Activated T-helper 1 cell treated with anti-CD3 and anti-CD28 coated beads, Interleukin-12 subunit alpha, Interleukin-12 subunit beta, Interleukin-2, Interleukin-4 antibody, amounts not matched to agents 30 ng/mL and 10 ng/mL and 1 ng/mL, durations not matched to agents 14 hours and 24 hours and 36 hours (primary cell): ENCODE measurements at regions of chr6 and their contacts with region 1.

Region 1: GRCh38 chr6:149316798-149317655 is 485 bp upstream of the TAB2 start:
- DNase-seq: peak; percentile 90
- H3K4me3 Mint-ChIP-seq: peak overlapping the region; percentile 85
- H3K27ac Mint-ChIP-seq: peak overlapping the region; percentile 85
- H3K4me1 Mint-ChIP-seq: peaks cover 39% of the 10 kb centered on the region
- H3K27me3 Mint-ChIP-seq: no peaks in the 10 kb centered on the region

Region 2: DNA sequence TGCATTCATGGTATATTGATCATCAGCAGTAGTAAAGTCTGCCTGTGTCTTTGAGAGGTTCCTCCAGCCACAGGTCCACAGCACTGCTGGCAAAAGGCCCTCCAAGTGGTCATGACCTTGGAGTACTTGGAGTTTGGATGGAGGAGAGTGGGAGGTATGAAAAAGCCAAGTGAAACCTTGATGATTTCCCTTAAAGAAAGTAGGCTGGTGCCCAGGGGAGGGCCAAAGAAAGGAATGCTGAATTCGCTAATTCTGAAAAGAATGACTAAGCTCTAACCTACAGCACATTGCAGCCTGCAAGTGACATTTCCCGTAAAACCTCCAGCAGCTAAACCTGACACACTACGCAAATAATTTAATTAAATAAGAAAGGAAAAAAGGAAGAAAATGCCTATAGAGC is 222.9 kb before region 1 on chr6:
- intact Hi-C with region 1: loop called (anchors 1 kb)
- DNase-seq: no peak
- H3K4me3 Mint-ChIP-seq: peak overlapping the region; percentile 64
- H3K27ac Mint-ChIP-seq: peak overlapping the region; percentile 88
- H3K4me1 Mint-ChIP-seq: peaks cover 78% of the 10 kb centered on the region
- H3K27me3 Mint-ChIP-seq: no peaks in the 10 kb centered on the region

Region 3: GRCh38 chr6:149134511-149134933 is 182.5 kb before region 1 on chr6:
- intact Hi-C with region 1: no loop called
- DNase-seq: no peak
- H3K4me3 Mint-ChIP-seq: no peak overlapping the region
- H3K27ac Mint-ChIP-seq: no peak overlapping the region
- H3K4me1 Mint-ChIP-seq: peaks cover 18% of the 10 kb centered on the region
- H3K27me3 Mint-ChIP-seq: no peaks in the 10 kb centered on the region

Region 4: GRCh38 chr6:149211046-149211571 is 105.9 kb before region 1 on chr6:
- intact Hi-C with region 1: loop called (anchors 1 kb)
- DNase-seq: no peak
- H3K4me3 Mint-ChIP-seq: no peak overlapping the region
- H3K27ac Mint-ChIP-seq: no peak overlapping the region
- H3K4me1 Mint-ChIP-seq: peaks cover 4% of the 10 kb centered on the region
- H3K27me3 Mint-ChIP-seq: no peaks in the 10 kb centered on the region

Region 5: DNA sequence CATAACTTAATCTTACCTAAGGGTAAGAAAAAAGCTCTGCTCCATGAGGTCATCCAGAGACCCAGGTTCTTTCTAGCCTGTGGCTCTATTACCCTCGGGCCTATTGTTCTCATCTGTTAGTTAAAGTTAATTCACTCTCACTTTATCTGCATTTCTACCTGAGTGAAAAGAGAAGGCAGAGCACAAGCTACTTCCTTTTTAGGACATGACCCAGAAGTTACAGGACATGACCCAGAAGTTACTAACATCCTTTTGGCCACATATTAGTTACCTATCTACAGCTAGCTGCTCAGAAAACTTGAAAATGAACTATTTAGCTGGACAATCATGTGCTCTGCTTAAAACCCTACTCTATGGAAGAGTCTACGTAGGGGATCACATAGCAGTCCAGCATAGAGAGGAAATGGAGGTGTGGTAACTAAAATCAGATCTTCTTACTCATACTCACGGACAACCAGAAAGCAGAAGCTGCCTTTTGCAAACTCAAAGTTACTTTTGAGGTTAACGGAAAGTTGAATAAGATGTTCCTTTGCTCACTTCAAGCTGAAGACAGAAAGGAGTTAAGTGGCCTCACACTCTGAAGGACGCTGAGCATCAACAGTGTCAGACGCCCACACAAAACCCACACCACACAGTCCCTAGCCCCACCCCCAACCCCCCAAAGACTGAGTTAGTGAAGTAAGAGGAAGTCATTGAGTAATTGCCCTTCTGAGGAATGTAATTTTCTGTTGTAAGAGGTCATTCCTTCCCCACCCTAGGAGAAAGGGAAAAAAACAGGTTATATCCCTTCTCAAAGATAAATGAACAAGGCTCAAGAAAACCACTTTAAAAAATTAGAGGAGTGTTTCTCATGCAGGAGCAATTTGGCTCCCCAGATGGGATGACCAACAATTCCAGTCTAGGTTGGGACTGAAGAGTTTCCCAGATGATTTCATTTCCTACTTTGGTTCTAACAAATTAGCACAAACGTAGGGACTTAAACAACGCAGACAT is 45.4 kb before region 1 on chr6:
- intact Hi-C with region 1: loop called (anchors 1 kb)
- DNase-seq: no peak
- H3K4me3 Mint-ChIP-seq: peak overlapping the region; percentile 62
- H3K27ac Mint-ChIP-seq: peak overlapping the region; percentile 94
- H3K4me1 Mint-ChIP-seq: peaks cover 56% of the 10 kb centered on the region
- H3K27me3 Mint-ChIP-seq: no peaks in the 10 kb centered on the region

Region 6: DNA sequence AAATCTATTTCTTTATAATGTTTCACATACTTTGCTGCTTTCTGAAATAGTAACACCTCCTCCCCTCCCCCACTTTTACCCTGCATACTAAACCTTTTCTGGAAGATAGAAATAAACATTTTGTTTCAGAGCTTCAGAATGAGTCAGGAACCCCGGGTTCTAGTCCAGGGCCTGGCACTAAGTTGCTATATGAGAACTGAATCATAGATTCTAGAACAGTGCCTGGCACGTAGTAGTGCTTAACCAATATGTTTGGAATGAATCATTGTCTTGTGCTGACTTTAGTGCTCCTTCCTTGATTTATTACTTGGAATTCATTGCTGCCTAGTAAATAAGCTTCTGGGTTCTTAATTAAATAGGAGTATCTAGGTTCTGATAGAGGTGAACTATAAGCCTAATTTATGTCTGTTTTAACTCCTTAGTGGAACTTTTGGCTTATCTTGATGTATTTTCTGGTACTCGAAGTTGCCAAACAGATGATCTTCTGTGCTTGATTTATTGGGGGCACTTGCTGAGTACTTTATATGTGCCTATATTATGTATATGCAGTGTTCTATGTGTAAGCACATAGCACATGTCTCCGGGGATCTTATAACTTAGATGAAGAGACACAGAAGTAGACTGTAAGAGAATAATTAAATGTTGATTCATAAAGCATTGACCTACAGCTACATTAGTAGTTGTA is 19.0 kb after region 1 on chr6:
- intact Hi-C with region 1: loop called (anchors 1 kb)
- DNase-seq: peak; percentile 22
- H3K4me3 Mint-ChIP-seq: peak overlapping the region; percentile 76
- H3K27ac Mint-ChIP-seq: peak overlapping the region; percentile 93
- H3K4me1 Mint-ChIP-seq: peaks cover 94% of the 10 kb centered on the region
- H3K27me3 Mint-ChIP-seq: no peaks in the 10 kb centered on the region

Region 7: DNA sequence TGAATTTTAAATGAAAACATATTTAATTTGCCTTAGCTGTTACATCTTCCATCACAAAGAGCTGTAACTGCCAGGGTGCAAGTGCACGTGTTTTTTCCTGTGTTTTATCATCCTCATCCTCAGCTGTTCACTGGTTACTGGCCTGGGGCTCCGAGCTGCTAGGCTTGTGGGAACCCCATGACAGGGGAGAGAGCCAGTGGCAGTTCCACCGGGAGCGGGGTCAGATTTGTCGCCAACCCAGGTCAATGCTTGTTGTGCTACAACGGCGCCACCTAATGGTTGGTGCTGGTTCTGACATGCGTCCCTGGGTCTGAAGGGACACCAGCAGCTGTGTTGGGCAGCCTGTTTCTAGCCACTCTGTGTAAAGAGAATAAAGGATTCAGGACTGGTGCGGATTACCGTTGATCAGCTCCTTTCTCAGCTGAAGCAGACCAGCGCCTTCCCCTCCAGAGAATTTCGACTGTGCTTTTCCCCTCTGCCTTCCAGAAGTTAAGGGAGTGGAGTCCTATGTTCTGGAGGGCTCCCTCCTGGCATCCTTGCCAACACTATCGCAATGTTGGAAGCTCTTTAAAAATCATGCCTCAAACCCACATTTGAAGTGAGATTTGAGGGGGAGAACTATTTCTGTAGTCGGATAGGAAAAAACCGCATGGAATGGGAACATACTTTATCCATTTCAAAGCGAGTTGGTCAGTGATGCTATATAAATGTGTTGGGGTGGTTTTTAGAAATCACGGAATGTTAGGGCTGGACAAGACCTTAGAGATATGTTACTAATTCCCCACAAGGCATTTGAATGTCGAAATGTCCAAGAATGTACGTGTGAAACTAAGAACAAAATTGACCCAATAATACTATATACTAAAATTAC is 115.1 kb after region 1 on chr6:
- intact Hi-C with region 1: loop called (anchors 2 kb)
- DNase-seq: peak; percentile 79
- H3K4me3 Mint-ChIP-seq: peak overlapping the region; percentile 48
- H3K27ac Mint-ChIP-seq: peak overlapping the region; percentile 79
- H3K4me1 Mint-ChIP-seq: peaks cover 23% of the 10 kb centered on the region
- H3K27me3 Mint-ChIP-seq: no peaks in the 10 kb centered on the region

Region 8: DNA sequence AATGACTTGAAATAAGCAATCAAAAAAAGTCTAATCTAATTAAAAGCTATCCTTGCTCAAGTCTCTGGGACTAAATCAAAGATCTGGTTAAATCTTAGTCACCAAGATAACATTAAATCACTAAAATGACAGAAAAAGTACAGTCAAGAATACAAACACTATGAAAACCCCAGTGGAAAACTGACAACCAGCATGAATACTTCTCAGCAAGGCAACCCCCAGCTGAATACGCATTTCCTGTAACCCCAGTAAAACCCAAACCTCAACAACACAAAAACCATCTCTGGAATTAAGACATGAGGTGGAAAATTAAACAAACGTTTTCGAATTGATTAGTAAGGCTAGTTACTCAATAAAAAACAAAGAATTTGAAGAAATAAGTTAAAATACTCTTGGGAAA is 191.5 kb after region 1 on chr6:
- intact Hi-C with region 1: loop called (anchors 1 kb)
- DNase-seq: peak; percentile 39
- H3K4me3 Mint-ChIP-seq: peak overlapping the region; percentile 13
- H3K27ac Mint-ChIP-seq: peak overlapping the region; percentile 81
- H3K4me1 Mint-ChIP-seq: peaks cover 53% of the 10 kb centered on the region
- H3K27me3 Mint-ChIP-seq: no peaks in the 10 kb centered on the region